Prostate gland (tissue), 2 donors: ENCODE measurements at regions of chr9 and their contacts with region 1.

Region 1: DNA sequence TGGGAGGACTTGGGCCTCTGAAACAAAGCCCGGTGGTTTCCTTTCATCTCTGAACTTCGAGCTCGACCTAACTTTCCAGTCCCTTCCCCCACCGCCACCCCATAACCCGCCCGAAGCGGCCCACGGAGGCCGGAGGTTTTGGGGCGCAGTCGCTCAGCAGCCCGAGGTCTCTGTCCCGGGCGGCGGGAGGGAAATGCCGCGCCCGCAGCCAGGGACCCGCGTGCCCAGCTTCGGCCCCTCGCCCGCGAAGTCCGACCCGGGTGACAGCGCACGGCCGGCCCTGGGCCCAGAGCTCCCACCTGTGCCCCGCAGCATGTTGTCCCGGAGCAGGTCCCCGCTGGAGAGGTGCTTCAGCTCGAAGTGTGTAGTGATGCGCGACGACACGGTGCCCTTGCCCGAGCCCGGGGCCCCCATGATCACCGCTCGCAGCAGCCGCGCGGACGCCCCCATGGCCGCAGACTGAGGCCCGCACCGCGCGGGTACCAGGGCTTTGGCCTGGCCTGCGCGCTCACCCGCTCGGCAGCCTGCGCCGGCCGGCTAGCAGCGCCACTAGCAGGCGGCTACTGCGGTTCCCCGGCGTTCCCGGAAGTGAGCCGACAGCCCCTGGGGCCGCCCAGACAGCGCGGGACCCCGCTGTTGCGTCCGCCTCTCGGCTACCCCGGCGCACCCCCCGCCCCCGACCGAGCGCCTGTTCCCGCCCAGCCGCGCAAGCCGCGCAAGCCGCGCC is at the start of gene AK3:
- DNase-seq: peak; percentile 89
- H3K4me3 ChIP-seq: peak within 1 kb of the TSS; percentile 75 to 82
- H3K27ac ChIP-seq: peak within 1 kb of the TSS; percentile 93 to 97
- H3K4me1 ChIP-seq: peaks cover 5% of the 10 kb centered on the region
- H3K27me3 ChIP-seq: no peaks in the 10 kb centered on the region
- CTCF ChIP-seq: peak in 3 of 4 experiments; percentile 33 to 57 (median 46)
- POLR2A ChIP-seq: peak; percentile 84
- total RNA-seq, gene AK3: 44.8 to 74.3 TPM

Region 2: GRCh38 chr9:4382722-4383317 is 358.0 kb before region 1 on chr9:
- intact Hi-C with region 1: loop called (anchors 5 kb)
- DNase-seq: no peak
- H3K4me3 ChIP-seq: no peak overlapping the region
- H3K27ac ChIP-seq: no peak overlapping the region
- H3K4me1 ChIP-seq: no peaks in the 10 kb centered on the region
- H3K27me3 ChIP-seq: no peaks in the 10 kb centered on the region
- CTCF ChIP-seq: peak in 3 of 4 experiments; percentile 37 to 64 (median 54)
- POLR2A ChIP-seq: no peak

Region 3: GRCh38 chr9:4662108-4662988 is 78.5 kb before region 1 on chr9 and contains the start of gene PLPP6:
- intact Hi-C with region 1: loop called (anchors 1 kb)
- DNase-seq: peak; percentile 92
- H3K4me3 ChIP-seq: peak within 1 kb of the TSS; percentile 77 to 90
- H3K27ac ChIP-seq: peak within 1 kb of the TSS; percentile 90 to 91
- H3K4me1 ChIP-seq: peaks cover 8% of the 10 kb centered on the region
- H3K27me3 ChIP-seq: no peaks in the 10 kb centered on the region
- CTCF ChIP-seq: peak; percentile 51 to 80 (median 72)
- POLR2A ChIP-seq: peak; percentile 65
- total RNA-seq, gene PLPP6: 15.6 to 32.5 TPM

Region 4: GRCh38 chr9:4792572-4793458 is 52.0 kb after region 1 on chr9 and contains the start of gene RCL1:
- intact Hi-C with region 1: no loop called
- DNase-seq: peak; percentile 95
- H3K4me3 ChIP-seq: peak within 1 kb of the TSS; percentile 67 to 91
- H3K27ac ChIP-seq: peak within 1 kb of the TSS; percentile 42 to 72
- H3K4me1 ChIP-seq: no peaks in the 10 kb centered on the region
- H3K27me3 ChIP-seq: no peaks in the 10 kb centered on the region
- CTCF ChIP-seq: no peak
- POLR2A ChIP-seq: peak; percentile 72
- total RNA-seq, gene RCL1: 18.9 to 29.3 TPM

Region 5: DNA sequence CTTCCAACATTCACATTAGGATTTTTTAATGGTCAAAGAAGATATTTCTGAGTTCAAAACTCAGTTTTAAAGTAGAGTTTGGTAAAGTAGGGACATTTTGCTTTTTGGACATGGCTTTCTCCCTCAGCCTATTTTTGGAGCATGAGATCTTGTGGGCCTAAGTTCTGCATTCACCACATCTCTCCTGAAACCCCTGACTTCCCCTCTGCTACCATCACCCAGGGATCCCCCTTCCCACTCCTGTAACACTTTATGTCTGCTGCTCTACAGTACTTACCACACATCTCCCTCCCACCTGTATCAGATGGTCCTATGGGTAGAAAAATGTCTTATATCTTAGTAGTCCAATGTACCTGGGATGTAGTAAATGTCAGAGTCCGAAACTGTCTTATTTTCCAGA is 196.0 kb after region 1 on chr9:
- intact Hi-C with region 1: no loop called
- DNase-seq: no peak
- H3K4me3 ChIP-seq: no peak overlapping the region
- H3K27ac ChIP-seq: no peak overlapping the region
- H3K4me1 ChIP-seq: peaks cover 4% of the 10 kb centered on the region
- H3K27me3 ChIP-seq: no peaks in the 10 kb centered on the region
- CTCF ChIP-seq: no peak
- POLR2A ChIP-seq: no peak